ENCODE measurements at regions of chr5 and their contacts with region 1.

Region 1: GRCh38 chr5:110757118-110757729 is 18.4 kb downstream of the SLC25A46 start:
- DNase-seq: peak in 1 of 2 donors; percentile 6
- ATAC-seq: no peak
- H3K4me3 ChIP-seq: no peak overlapping the region
- H3K27ac ChIP-seq: no peak overlapping the region
- H3K4me1 ChIP-seq: no peaks in the 10 kb centered on the region
- H3K27me3 ChIP-seq: no peaks in the 10 kb centered on the region
- CTCF ChIP-seq: peak; percentile 51 to 78 (median 74)

Region 2: GRCh38 chr5:111063700-111064322 is 306.6 kb after region 1 on chr5:
- intact Hi-C with region 1: loop called in 6 of 10 experiments (anchors 5 to 10 kb)
- DNase-seq: no peak
- ATAC-seq: no peak
- H3K4me3 ChIP-seq: no peak overlapping the region
- H3K27ac ChIP-seq: no peak overlapping the region
- H3K4me1 ChIP-seq: no peaks in the 10 kb centered on the region
- H3K27me3 ChIP-seq: peaks cover 0 to 34% (median 17%) of the 10 kb centered on the region in 7 donors
- CTCF ChIP-seq: peak in 8 of 9 donors; percentile 8 to 57 (median 44)

Region 3: GRCh38 chr5:111072949-111073682 is 315.9 kb after region 1 on chr5:
- intact Hi-C with region 1: loop called in 8 of 10 experiments (anchors 2 to 10 kb)
- DNase-seq: peak; percentile 62 to 76
- ATAC-seq: peak; percentile 82 to 97 (median 94)
- H3K4me3 ChIP-seq: peak overlapping the region; percentile 20 to 61 (median 54)
- H3K27ac ChIP-seq: peak overlapping the region in 7 of 10 donors; percentile 21 to 62 (median 44)
- H3K4me1 ChIP-seq: peaks cover 0 to 37% (median 8%) of the 10 kb centered on the region in 9 donors
- H3K27me3 ChIP-seq: peaks cover 0 to 58% (median 21%) of the 10 kb centered on the region in 7 donors
- CTCF ChIP-seq: peak in 2 of 9 donors; percentile 36 to 45

Region 4: GRCh38 chr5:111092062-111092853 is 335.0 kb after region 1 on chr5 and contains the start of gene WDR36:
- intact Hi-C with region 1: loop called in 3 of 10 experiments (anchors 5 to 10 kb)
- DNase-seq: peak; percentile 88 to 90
- ATAC-seq: peak; percentile 96 to 99 (median 98)
- H3K4me3 ChIP-seq: peak within 1 kb of the TSS; percentile 69 to 99 (median 84)
- H3K27ac ChIP-seq: peak within 1 kb of the TSS; percentile 44 to 95 (median 84)
- H3K4me1 ChIP-seq: peaks cover 7 to 27% (median 21%) of the 10 kb centered on the region in 9 donors
- H3K27me3 ChIP-seq: no peaks in the 10 kb centered on the region
- CTCF ChIP-seq: no peak
- total RNA-seq, gene WDR36: 11.2 to 15.8 (median 13.6) TPM

Region 5: DNA sequence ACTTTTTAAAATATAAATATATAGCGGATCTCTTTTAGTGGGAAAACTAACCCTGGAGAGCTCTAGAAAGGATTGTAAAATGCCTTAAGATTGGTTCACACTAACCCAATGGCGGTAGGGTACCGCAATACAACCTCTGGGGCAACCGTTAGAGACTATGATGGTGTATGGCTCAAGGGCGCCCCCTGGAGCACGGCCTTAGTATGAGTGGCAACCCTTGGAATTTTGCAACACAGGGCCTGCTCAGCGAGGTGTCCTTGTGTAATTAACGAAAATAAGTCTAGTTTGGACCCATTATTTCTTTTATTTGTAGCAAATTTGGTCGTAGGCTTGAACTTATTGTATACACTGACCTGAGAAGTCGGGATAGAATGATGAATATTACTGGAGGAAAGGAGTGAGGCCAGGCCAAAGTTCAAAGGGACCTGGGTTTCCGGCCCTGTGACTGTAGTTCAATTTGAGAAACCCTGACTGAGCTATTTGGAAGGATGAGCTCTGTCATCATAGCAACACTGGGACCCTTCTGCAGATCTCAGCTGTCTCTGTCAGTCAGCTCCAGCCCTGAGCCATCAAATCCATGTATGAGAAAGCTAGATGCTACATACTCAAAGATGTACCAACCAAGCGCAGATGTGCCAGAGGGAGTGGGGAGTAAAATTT is 521.8 kb after region 1 on chr5:
- intact Hi-C with region 1: loop called in 1 of 10 experiments (anchors 2 kb)
- DNase-seq: peak; percentile 34 to 52
- ATAC-seq: peak in 4 of 8 donors; percentile 25 to 59 (median 59)
- H3K4me3 ChIP-seq: no peak overlapping the region
- H3K27ac ChIP-seq: no peak overlapping the region
- H3K4me1 ChIP-seq: no peaks in the 10 kb centered on the region
- H3K27me3 ChIP-seq: peaks cover 0 to 5% (median 0%) of the 10 kb centered on the region in 7 donors
- CTCF ChIP-seq: peak; percentile 48 to 77 (median 67)

Measured in heart right ventricle (tissue), 16 donors.